ENCODE measurements at regions of chr7 and their contacts with region 1.

Region 1: GRCh38 chr7:103524042-103524907 is 78.3 kb upstream of the SLC26A5 start:
- DNase-seq: no peak
- H3K4me3 ChIP-seq: no peak overlapping the region
- H3K27ac ChIP-seq: no peak overlapping the region
- H3K4me1 ChIP-seq: no peaks in the 10 kb centered on the region
- H3K27me3 ChIP-seq: peaks cover 13% of the 10 kb centered on the region
- CTCF ChIP-seq: peak; percentile 52

Region 2: DNA sequence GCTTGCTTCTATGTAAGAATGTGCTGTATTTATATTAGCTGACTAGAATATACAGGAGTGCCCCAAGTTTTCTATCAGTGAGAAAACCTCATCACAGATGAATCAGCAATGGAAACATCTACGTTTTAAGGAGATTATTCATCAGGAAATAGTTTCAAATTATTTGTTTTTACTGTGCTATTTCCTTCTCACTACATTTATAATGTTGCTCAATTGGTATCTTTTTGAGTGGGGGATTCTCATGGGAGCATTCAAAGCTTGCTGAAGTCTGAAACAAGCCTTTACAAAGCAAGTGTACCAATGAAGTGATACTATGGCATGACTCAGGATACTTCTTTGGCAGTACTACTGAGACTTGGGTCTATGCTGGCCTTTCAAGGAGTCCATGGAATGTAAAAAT is 112.8 kb after region 1 on chr7:
- CTCF ChIA-PET with region 1: no interaction called
- POLR2A ChIA-PET with region 1: no interaction called
- intact Hi-C with region 1: no loop called
- DNase-seq: peak in 1 of 2 experiments; percentile 65
- H3K4me3 ChIP-seq: no peak overlapping the region
- H3K27ac ChIP-seq: peak overlapping the region; percentile 89
- H3K4me1 ChIP-seq: peaks cover 39% of the 10 kb centered on the region
- H3K27me3 ChIP-seq: no peaks in the 10 kb centered on the region
- CTCF ChIP-seq: no peak

Region 3: GRCh38 chr7:103668279-103668941 is 144.1 kb after region 1 on chr7:
- CTCF ChIA-PET with region 1: no interaction called
- POLR2A ChIA-PET with region 1: no interaction called
- intact Hi-C with region 1: no loop called
- DNase-seq: no peak
- H3K4me3 ChIP-seq: no peak overlapping the region
- H3K27ac ChIP-seq: no peak overlapping the region
- H3K4me1 ChIP-seq: no peaks in the 10 kb centered on the region
- H3K27me3 ChIP-seq: no peaks in the 10 kb centered on the region
- CTCF ChIP-seq: no peak

Region 4: DNA sequence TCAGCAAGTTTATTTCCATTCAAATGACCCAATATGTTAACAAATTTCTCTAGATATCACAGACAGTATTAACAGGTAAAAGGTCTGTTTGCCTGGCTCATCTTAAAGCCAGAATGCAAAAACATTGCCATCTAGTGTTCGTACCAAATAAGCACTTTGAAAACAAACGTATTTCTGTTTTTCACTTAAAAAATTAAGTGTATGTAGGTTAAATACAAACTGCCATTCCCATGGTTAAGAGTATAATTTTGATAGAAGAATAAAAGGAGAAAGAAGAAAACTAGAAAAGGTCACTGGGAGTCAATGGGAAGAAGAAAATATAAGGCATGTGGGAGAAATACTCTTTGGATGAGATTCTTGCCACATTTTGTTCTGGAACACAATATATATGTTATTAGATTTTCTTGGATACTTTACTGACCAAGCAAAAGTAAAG is 632.6 kb after region 1 on chr7:
- CTCF ChIA-PET with region 1: no interaction called
- POLR2A ChIA-PET with region 1: no interaction called
- intact Hi-C with region 1: loop called (anchors 2 kb)
- DNase-seq: no peak
- H3K4me3 ChIP-seq: no peak overlapping the region
- H3K27ac ChIP-seq: no peak overlapping the region
- H3K4me1 ChIP-seq: no peaks in the 10 kb centered on the region
- H3K27me3 ChIP-seq: no peaks in the 10 kb centered on the region
- CTCF ChIP-seq: peak; percentile 76

Region 5: GRCh38 chr7:104848138-104848990 is 1324.1 kb after region 1 on chr7:
- CTCF ChIA-PET with region 1: no interaction called
- POLR2A ChIA-PET with region 1: no interaction called
- intact Hi-C with region 1: loop called (anchors 2 kb)
- DNase-seq: peak in 1 of 2 experiments; percentile 50
- H3K4me3 ChIP-seq: no peak overlapping the region
- H3K27ac ChIP-seq: no peak overlapping the region
- H3K4me1 ChIP-seq: no peaks in the 10 kb centered on the region
- H3K27me3 ChIP-seq: peaks cover 67% of the 10 kb centered on the region
- CTCF ChIP-seq: peak; percentile 97

Region 6: GRCh38 chr7:104914421-104914820 is 1390.1 kb after region 1 on chr7:
- CTCF ChIA-PET with region 1: interaction called, 7 read pairs
- POLR2A ChIA-PET with region 1: no interaction called
- intact Hi-C with region 1: loop called (anchors 10 kb)
- DNase-seq: no peak
- H3K4me3 ChIP-seq: no peak overlapping the region
- H3K27ac ChIP-seq: no peak overlapping the region
- H3K4me1 ChIP-seq: no peaks in the 10 kb centered on the region
- H3K27me3 ChIP-seq: peaks cover 10% of the 10 kb centered on the region
- CTCF ChIP-seq: no peak

Measured in PC-9 (cell line).